GM13976 (cell line): ENCODE measurements at regions of chr10 and their contacts with region 1.

Region 1: GRCh38 chr10:97914837-97915211 is 65.2 kb downstream of the GOLGA7B start:
- DNase-seq: peak; percentile 91
- CTCF ChIP-seq: peak; percentile 73

Region 2: DNA sequence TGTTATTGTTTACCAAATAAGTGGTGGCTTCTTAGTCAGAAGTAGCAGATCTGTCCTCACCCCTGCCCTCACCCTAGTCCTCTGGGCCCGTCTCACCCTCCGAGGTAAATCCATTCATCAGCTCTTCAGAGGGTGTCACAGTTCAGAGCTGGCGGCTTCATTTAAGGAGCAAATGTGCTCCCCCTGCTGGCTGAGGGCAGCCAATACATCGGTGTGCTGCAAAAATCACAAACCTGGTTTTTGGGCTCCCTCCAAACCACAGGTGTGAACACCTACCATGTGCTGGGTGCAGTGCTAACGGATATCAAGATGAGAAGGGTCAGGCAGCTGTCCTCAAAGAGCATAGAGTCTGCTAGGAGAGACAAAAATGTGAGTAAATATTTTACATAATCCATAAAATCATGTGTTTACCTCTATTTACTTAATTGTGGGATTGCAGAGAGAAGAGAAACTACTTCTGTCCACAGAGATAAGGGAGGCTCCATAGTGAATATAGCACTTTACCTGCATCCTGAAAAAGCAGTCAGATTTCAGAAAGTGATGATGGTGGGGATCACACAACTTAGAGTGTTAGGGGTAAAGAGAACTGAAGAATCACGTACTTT is 131.1 kb after region 1 on chr10:
- in situ Hi-C with region 1: loop called (anchors 10 kb)
- DNase-seq: peak; percentile 73
- CTCF ChIP-seq: peak; percentile 87